CD8-positive, alpha-beta T cell (primary cell): ENCODE measurements at regions of chr6 and their contacts with region 1.

Region 1: DNA sequence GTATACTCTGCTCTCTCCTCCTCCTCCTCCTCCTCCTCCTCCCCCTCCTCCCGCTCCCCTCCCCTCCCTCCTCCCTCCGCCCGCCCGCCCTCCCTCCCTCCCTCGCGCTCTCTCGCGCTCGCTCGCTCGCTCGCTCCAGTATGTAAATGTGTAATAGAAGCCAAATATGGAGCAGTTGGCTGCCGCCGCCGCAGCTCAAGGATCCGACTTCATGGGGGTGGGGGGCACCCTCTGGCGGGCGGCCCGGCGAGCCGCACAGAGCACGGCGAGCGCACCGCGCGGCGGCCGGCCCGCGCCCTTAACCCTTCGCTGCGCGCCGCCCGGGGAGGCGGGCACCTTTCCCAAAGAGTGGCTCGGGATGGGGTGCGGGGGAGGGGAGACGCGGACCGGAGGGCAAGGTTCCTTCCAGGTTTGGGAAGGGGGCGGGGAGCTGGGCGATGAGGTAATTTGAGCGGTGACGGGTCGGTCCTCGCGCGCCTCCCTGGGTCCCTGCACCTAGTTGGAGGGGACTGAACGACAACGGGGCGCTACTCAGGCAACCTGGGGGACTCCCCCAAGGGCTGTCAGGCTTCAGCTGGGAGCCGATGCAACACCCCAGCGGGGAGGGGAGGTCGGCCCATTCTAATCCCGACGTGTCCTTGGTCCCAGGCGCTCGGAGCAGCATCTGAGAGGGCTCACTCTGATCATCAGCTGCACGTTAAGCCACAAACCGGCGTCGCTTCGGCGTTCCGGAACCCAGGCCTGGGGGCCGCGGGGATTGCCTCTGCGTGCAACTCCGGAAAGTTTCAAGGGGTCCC is 409 bp upstream of the ATXN1 start:
- DNase-seq: peak; percentile 72 to 93 (median 83)
- ATAC-seq: peak; percentile 56
- H3K4me3 ChIP-seq: peak overlapping the region; percentile 76 to 79
- H3K4me3 Mint-ChIP-seq: peak overlapping the region; percentile 97
- H3K27ac ChIP-seq: peak overlapping the region; percentile 93 to 96
- H3K27ac Mint-ChIP-seq: peak overlapping the region; percentile 99
- H3K4me1 ChIP-seq: peaks cover 30% of the 10 kb centered on the region
- H3K4me1 Mint-ChIP-seq: peaks cover 61% of the 10 kb centered on the region
- H3K27me3 ChIP-seq: no peaks in the 10 kb centered on the region
- H3K27me3 Mint-ChIP-seq: no peaks in the 10 kb centered on the region
- CTCF ChIP-seq: no peak

Region 2: DNA sequence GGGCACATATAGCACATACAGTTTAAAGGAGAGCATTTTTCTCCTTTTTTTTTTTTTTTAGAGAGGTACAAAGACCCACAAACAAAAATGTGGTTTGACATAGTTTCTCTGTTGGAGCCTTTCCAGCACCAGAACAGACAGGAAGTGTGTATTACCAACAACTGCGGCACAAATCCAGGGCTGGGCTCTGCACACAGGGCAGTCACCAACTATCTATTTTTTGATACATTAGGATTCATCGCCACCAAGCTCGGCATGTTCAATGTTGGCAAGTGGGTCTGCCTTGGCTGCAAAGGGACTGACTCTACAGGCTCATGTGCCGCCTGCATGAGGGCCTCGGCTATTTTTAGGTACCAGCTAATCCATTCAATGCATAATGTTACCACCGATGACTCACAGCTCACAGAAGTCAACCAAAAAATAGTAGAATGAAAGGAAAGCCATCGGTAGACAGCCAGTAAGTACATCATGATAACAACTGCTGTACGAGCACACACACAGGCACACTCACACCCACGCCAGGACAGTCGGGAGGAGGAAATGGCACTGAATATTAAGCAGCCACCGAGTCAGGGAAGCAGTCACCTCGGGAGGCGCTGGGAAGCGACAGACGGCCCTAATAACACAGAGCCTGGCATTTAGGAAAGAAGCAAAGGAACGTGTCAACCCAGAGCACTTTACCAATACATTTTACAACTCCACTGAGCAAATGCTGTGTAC is 441.7 kb before region 1 on chr6:
- CTCF ChIA-PET with region 1: interaction called, 3 read pairs
- POLR2A ChIA-PET with region 1: interaction called, 7 read pairs
- intact Hi-C with region 1: loop called in 1 of 2 experiments (anchors 2 kb)
- DNase-seq: peak; percentile 27 to 90 (median 68)
- ATAC-seq: peak; percentile 58
- H3K4me3 ChIP-seq: peak overlapping the region; percentile 17 to 33
- H3K4me3 Mint-ChIP-seq: peak overlapping the region; percentile 67
- H3K27ac ChIP-seq: peak overlapping the region; percentile 69 to 85
- H3K27ac Mint-ChIP-seq: peak overlapping the region; percentile 94
- H3K4me1 ChIP-seq: peaks cover 73% of the 10 kb centered on the region
- H3K4me1 Mint-ChIP-seq: peaks cover 75% of the 10 kb centered on the region
- H3K27me3 ChIP-seq: no peaks in the 10 kb centered on the region
- H3K27me3 Mint-ChIP-seq: no peaks in the 10 kb centered on the region
- CTCF ChIP-seq: no peak

Region 3: GRCh38 chr6:16481697-16482399 is 279.8 kb before region 1 on chr6:
- CTCF ChIA-PET with region 1: interaction called, 4 read pairs
- POLR2A ChIA-PET with region 1: interaction called, 4 read pairs
- intact Hi-C with region 1: loop called (anchors 2 kb)
- DNase-seq: peak; percentile 30 to 95 (median 61)
- ATAC-seq: peak; percentile 81
- H3K4me3 ChIP-seq: no peak overlapping the region
- H3K4me3 Mint-ChIP-seq: peak overlapping the region; percentile 52
- H3K27ac ChIP-seq: peak overlapping the region; percentile 28 to 83
- H3K27ac Mint-ChIP-seq: peak overlapping the region; percentile 95
- H3K4me1 ChIP-seq: peaks cover 61% of the 10 kb centered on the region
- H3K4me1 Mint-ChIP-seq: peaks cover 77% of the 10 kb centered on the region
- H3K27me3 ChIP-seq: no peaks in the 10 kb centered on the region
- H3K27me3 Mint-ChIP-seq: no peaks in the 10 kb centered on the region
- CTCF ChIP-seq: no peak

Region 4: GRCh38 chr6:16698997-16699868 is 62.4 kb before region 1 on chr6:
- CTCF ChIA-PET with region 1: no interaction called
- POLR2A ChIA-PET with region 1: interaction called, 7 read pairs
- intact Hi-C with region 1: loop called in 1 of 2 experiments (anchors 5 kb)
- DNase-seq: peak in 4 of 9 experiments; percentile 20 to 77 (median 46)
- ATAC-seq: peak; percentile 71
- H3K4me3 ChIP-seq: peak overlapping the region in 1 of 2 experiments; percentile 61
- H3K4me3 Mint-ChIP-seq: peak overlapping the region; percentile 80
- H3K27ac ChIP-seq: peak overlapping the region; percentile 48 to 87
- H3K27ac Mint-ChIP-seq: peak overlapping the region; percentile 92
- H3K4me1 ChIP-seq: peaks cover 16% of the 10 kb centered on the region
- H3K4me1 Mint-ChIP-seq: peaks cover 67% of the 10 kb centered on the region
- H3K27me3 ChIP-seq: no peaks in the 10 kb centered on the region
- H3K27me3 Mint-ChIP-seq: no peaks in the 10 kb centered on the region
- CTCF ChIP-seq: no peak

Region 5: GRCh38 chr6:16819752-16820151 is 58.1 kb after region 1 on chr6:
- CTCF ChIA-PET with region 1: interaction called, 3 read pairs
- POLR2A ChIA-PET with region 1: no interaction called
- intact Hi-C with region 1: loop called in 1 of 2 experiments (anchors 1 kb)
- DNase-seq: peak in 2 of 9 experiments; percentile 16 to 35
- ATAC-seq: no peak
- H3K4me3 ChIP-seq: no peak overlapping the region
- H3K4me3 Mint-ChIP-seq: no peak overlapping the region
- H3K27ac ChIP-seq: no peak overlapping the region
- H3K27ac Mint-ChIP-seq: no peak overlapping the region
- H3K4me1 ChIP-seq: no peaks in the 10 kb centered on the region
- H3K4me1 Mint-ChIP-seq: no peaks in the 10 kb centered on the region
- H3K27me3 ChIP-seq: no peaks in the 10 kb centered on the region
- H3K27me3 Mint-ChIP-seq: peaks cover 13% of the 10 kb centered on the region
- CTCF ChIP-seq: no peak

Region 6: GRCh38 chr6:17706580-17707370 is 945.1 kb after region 1 on chr6 and contains the start of gene NUP153:
- CTCF ChIA-PET with region 1: no interaction called
- POLR2A ChIA-PET with region 1: no interaction called
- intact Hi-C with region 1: loop called (anchors 5 to 10 kb)
- DNase-seq: peak; percentile 98 to 100 (median 100)
- ATAC-seq: peak; percentile 77
- H3K4me3 ChIP-seq: peak within 1 kb of the TSS; percentile 84 to 96
- H3K4me3 Mint-ChIP-seq: peak within 1 kb of the TSS; percentile 88
- H3K27ac ChIP-seq: peak within 1 kb of the TSS; percentile 99
- H3K27ac Mint-ChIP-seq: peak within 1 kb of the TSS; percentile 96
- H3K4me1 ChIP-seq: peaks cover 39% of the 10 kb centered on the region
- H3K4me1 Mint-ChIP-seq: peaks cover 40% of the 10 kb centered on the region
- H3K27me3 ChIP-seq: no peaks in the 10 kb centered on the region
- H3K27me3 Mint-ChIP-seq: no peaks in the 10 kb centered on the region
- CTCF ChIP-seq: no peak
- total RNA-seq, gene NUP153: 76.4 to 77.7 TPM